ENCODE measurements at regions of chr2 and their contacts with region 1.

Region 1: DNA sequence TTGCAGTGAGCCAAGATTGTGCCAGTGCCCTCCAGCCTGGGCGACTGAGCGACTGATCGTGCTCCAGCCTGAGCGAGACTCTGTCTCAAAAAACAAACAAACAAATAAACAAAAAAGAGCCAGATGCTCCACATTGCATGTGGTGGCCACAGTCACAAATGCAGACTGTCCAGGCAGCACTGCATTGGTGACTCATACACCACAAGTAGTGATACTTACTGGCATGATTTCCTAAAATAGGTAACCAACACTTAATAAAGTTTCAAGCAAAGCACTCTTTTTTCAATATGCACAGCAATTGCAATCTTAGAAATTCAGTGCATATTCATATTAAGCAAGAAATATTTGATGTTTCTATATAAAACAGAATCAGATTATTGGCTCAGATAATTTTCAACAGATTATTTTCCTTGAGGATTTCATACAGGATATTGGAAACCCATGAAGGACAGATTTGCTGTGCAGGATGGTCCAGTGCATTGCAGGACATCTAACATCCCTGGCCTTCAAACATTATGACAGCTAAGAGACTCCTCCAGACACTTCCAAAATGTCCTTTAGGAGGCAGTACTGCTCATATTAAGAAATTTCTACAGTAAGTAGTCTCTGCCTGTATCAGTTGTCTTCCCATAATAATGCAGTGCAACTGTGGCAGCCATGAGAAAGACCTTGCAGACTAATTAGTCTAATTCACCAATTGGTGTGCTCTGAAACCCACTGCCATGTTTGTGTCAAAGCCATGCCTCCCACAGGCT is 10.5 kb upstream of the SLC1A4 start:
- DNase-seq: peak in 3 of 4 experiments; percentile 22 to 41 (median 23)
- ATAC-seq: peak; percentile 94
- H3K4me3 ChIP-seq: no peak overlapping the region
- H3K27ac ChIP-seq: no peak overlapping the region
- H3K4me1 ChIP-seq: peaks cover 0 to 3% of the 10 kb centered on the region in 2 experiments; a peak in 2 of 5 replicates
- H3K27me3 ChIP-seq: peaks cover 0 to 4% of the 10 kb centered on the region in 2 experiments; a peak in 1 of 5 replicates
- CTCF ChIP-seq: peak; percentile 54 to 68 (median 58)
- EP300 ChIP-seq: no peak
- POLR2A ChIP-seq: no peak
- RAD21 ChIP-seq: peak; percentile 47 to 65

Region 2: GRCh38 chr2:64831134-64831976 is 147.3 kb before region 1 on chr2:
- CTCF ChIA-PET with region 1: no interaction called
- POLR2A ChIA-PET with region 1: no interaction called
- in situ Hi-C with region 1: no loop called
- intact Hi-C with region 1: no loop called
- DNase-seq: peak; percentile 90 to 94 (median 92)
- ATAC-seq: peak; percentile 99
- H3K4me3 ChIP-seq: no peak overlapping the region
- H3K27ac ChIP-seq: peak overlapping the region; percentile 94
- H3K4me1 ChIP-seq: peaks cover 10 to 27% of the 10 kb centered on the region in 2 experiments
- H3K27me3 ChIP-seq: no peaks in the 10 kb centered on the region
- CTCF ChIP-seq: peak; percentile 91 to 98 (median 91)
- EP300 ChIP-seq: peak; percentile 29; the same call in 1 of the 2 replicates
- POLR2A ChIP-seq: 0 out of 2 replicates have a peak, but pooled peaks have one; percentile 52
- RAD21 ChIP-seq: peak; percentile 79 to 80

Region 3: DNA sequence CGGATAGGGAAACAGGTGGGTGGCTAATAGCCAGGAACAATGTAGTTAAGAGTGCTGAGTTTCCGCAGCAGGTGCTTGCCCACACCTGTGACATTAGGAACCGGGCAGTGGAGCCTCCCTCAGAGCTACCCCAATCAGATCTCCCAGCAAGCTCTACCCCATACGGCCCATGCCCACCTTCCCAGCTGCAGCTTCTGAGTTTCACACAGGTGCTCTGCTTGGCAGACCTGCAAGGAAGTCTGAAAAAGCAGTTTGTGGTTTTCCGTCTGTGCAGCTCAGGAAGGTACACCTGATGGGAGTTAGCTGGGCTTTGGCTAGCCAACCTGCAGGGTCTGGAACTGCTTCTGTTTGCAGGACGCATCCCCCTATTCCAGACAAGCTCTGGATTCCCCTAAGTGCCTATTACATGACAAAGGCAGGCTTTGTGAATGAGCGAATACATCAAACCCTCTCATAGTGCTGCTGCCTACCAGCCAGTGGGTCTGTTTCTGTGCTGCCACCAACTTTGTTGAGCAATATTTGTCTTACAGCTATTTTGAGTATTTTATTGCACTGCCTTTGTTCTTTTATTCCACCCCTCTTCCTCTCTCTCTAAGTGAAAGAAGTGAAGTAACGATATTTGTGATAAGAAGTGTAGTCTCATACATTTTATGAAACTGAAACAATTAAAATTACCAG is 52.8 kb after region 1 on chr2:
- CTCF ChIA-PET with region 1: interaction called, 3 read pairs
- POLR2A ChIA-PET with region 1: no interaction called
- in situ Hi-C with region 1: no loop called
- intact Hi-C with region 1: loop called (anchors 2 kb)
- DNase-seq: no peak
- ATAC-seq: no peak
- H3K4me3 ChIP-seq: no peak overlapping the region
- H3K27ac ChIP-seq: no peak overlapping the region
- H3K4me1 ChIP-seq: peaks cover 3 to 5% of the 10 kb centered on the region in 2 experiments; a peak in 1 of 5 replicates
- H3K27me3 ChIP-seq: no peaks in the 10 kb centered on the region
- CTCF ChIP-seq: no peak
- EP300 ChIP-seq: no peak
- POLR2A ChIP-seq: no peak
- RAD21 ChIP-seq: no peak

Region 4: GRCh38 chr2:65040400-65041261 is 61.9 kb after region 1 on chr2:
- CTCF ChIA-PET with region 1: interaction called, 4 read pairs
- POLR2A ChIA-PET with region 1: no interaction called
- in situ Hi-C with region 1: no loop called
- intact Hi-C with region 1: loop called (anchors 2 kb)
- DNase-seq: peak; percentile 81 to 87 (median 86)
- ATAC-seq: peak; percentile 98
- H3K4me3 ChIP-seq: no peak overlapping the region
- H3K27ac ChIP-seq: no peak overlapping the region
- H3K4me1 ChIP-seq: peaks cover 2 to 4% of the 10 kb centered on the region in 2 experiments; a peak in 2 of 5 replicates
- H3K27me3 ChIP-seq: no peaks in the 10 kb centered on the region
- CTCF ChIP-seq: peak; percentile 92 to 94 (median 93)
- EP300 ChIP-seq: no peak
- POLR2A ChIP-seq: no peak
- RAD21 ChIP-seq: peak; percentile 94 to 95

Region 5: GRCh38 chr2:65377556-65378192 is 399.0 kb after region 1 on chr2:
- CTCF ChIA-PET with region 1: no interaction called
- POLR2A ChIA-PET with region 1: no interaction called
- in situ Hi-C with region 1: no loop called
- intact Hi-C with region 1: no loop called
- DNase-seq: peak in 3 of 4 experiments; percentile 43 to 53 (median 53)
- ATAC-seq: peak; percentile 51
- H3K4me3 ChIP-seq: no peak overlapping the region
- H3K27ac ChIP-seq: no peak overlapping the region
- H3K4me1 ChIP-seq: peaks cover 17 to 83% of the 10 kb centered on the region in 2 experiments; a peak in 4 of 5 replicates
- H3K27me3 ChIP-seq: no peaks in the 10 kb centered on the region
- CTCF ChIP-seq: no peak
- EP300 ChIP-seq: no peak
- POLR2A ChIP-seq: no peak
- RAD21 ChIP-seq: no peak